ENCODE measurements at regions of chr15 and their contacts with region 1.

Region 1: GRCh38 chr15:56957812-56958406 is 39.5 kb downstream of the TCF12 start:
- DNase-seq: no peak
- ATAC-seq: no peak
- H3K4me3 ChIP-seq: no peak overlapping the region
- H3K4me3 Mint-ChIP-seq: peak overlapping the region in 9 of 10 donors; percentile 3 to 71 (median 45)
- H3K27ac ChIP-seq: no peak overlapping the region
- H3K27ac Mint-ChIP-seq: peak overlapping the region in 5 of 9 donors; percentile 11 to 65 (median 35)
- H3K4me1 ChIP-seq: peaks cover 15 to 20% of the 10 kb centered on the region in 2 donors
- H3K4me1 Mint-ChIP-seq: peaks cover 15 to 56% (median 45%) of the 10 kb centered on the region in 7 donors
- H3K27me3 ChIP-seq: no peaks in the 10 kb centered on the region
- H3K27me3 Mint-ChIP-seq: no peaks in the 10 kb centered on the region

Region 2: DNA sequence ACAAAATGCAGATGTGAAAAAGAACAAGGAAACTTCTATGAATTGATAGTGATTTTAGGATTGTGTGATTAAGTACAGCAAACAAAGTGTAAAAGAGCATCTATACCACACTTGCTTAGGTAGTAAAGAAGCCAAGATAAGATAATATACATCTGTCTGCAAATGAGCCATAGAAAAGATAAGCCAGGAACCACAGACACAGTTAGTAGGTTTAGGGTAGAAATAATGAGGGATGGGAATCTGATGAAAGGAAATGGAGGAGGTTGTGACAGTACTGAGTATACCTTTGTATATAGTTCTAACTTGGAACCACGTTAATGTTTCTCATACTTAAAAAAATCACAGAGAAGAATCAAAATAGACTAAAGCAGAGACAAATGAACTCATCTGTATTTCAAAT is 14.5 kb after region 1 on chr15:
- CTCF ChIA-PET with region 1: no interaction called
- POLR2A ChIA-PET with region 1: no interaction called
- intact Hi-C with region 1: loop called in 1 of 2 experiments (anchors 2 kb)
- DNase-seq: no peak
- ATAC-seq: no peak
- H3K4me3 ChIP-seq: no peak overlapping the region
- H3K4me3 Mint-ChIP-seq: peak overlapping the region in 1 of 10 donors; percentile 1
- H3K27ac ChIP-seq: no peak overlapping the region
- H3K27ac Mint-ChIP-seq: peak overlapping the region in 4 of 9 donors; percentile 0 to 33 (median 9)
- H3K4me1 ChIP-seq: peaks cover 0 to 5% of the 10 kb centered on the region in 2 donors
- H3K4me1 Mint-ChIP-seq: peaks cover 30 to 80% (median 65%) of the 10 kb centered on the region in 7 donors
- H3K27me3 ChIP-seq: no peaks in the 10 kb centered on the region
- H3K27me3 Mint-ChIP-seq: no peaks in the 10 kb centered on the region

Measured in naive thymus-derived CD4-positive, alpha-beta T cell (primary cell).